Gastrocnemius medialis (tissue), 4 donors: ENCODE measurements at regions of chrX and their contacts with region 1.

Region 1: DNA sequence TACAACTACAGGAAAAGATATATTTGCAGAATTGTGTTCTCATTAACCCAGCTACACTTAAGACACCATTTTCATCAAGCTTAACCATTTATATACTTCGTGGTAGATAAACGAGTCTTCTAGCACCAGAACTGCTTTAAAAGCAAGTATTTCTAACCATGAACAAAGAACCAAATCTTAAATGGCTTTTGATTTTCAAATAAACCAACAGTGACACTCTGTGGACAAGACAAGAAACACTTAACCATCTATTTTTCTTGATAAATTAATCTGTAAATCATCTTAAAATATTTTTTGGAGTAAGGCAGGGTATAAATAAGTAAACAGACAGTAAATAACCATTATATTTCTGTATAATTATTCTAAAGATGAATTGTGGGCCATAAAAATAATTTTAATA is 10.2 kb downstream of the BEND2 start:
- DNase-seq: no peak
- ATAC-seq: no peak
- H3K4me3 ChIP-seq: no peak overlapping the region
- H3K27ac ChIP-seq: no peak overlapping the region
- H3K4me1 ChIP-seq: no peaks in the 10 kb centered on the region
- H3K27me3 ChIP-seq: no peaks in the 10 kb centered on the region
- CTCF ChIP-seq: peak in 2 of 5 experiments; percentile 7 to 35
- POLR2A ChIP-seq: no peak

Region 2: GRCh38 chrX:17788439-17788838 is 422.0 kb before region 1 on chrX:
- in situ Hi-C with region 1: loop called in 2 of 4 experiments (anchors 25 kb)
- intact Hi-C with region 1: loop called (anchors 10 kb)
- DNase-seq: no peak
- ATAC-seq: no peak
- H3K4me3 ChIP-seq: no peak overlapping the region
- H3K27ac ChIP-seq: no peak overlapping the region
- H3K4me1 ChIP-seq: no peaks in the 10 kb centered on the region
- H3K27me3 ChIP-seq: no peaks in the 10 kb centered on the region
- CTCF ChIP-seq: peak; percentile 38 to 75 (median 63)
- POLR2A ChIP-seq: no peak

Region 3: DNA sequence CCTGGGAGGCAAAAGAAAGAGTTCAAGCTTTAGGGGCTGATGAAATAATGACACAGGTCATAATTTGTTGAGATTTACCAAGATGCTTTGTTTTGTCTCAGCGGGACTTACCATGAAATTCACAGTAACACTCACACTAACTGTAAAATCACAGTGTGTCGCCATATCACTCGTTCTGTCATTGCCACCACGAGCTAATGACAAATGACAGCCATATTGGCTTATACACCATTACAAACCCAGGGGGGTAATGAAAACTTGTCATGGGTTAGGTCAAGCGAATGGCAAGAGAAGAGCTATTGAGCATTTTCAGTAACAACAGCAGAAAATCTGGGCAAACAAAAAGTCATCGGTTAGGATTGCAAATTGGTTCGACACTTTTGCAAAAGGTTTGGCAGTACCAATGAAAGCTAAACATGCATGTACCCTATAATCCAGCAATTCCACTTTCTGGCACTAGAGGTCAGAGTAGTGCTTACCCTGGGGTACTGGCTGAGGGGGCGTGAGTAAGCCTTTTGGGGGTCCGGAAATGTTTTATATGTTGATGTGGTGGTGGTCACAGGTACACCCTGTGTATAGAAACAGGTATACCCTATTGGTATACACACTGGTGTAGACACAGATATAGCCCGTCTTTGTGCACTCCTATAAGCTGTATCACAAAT is 265.5 kb before region 1 on chrX:
- in situ Hi-C with region 1: loop called in 1 of 4 experiments (anchors 25 kb)
- intact Hi-C with region 1: no loop called
- DNase-seq: no peak
- ATAC-seq: no peak
- H3K4me3 ChIP-seq: no peak overlapping the region
- H3K27ac ChIP-seq: no peak overlapping the region
- H3K4me1 ChIP-seq: no peaks in the 10 kb centered on the region
- H3K27me3 ChIP-seq: no peaks in the 10 kb centered on the region
- CTCF ChIP-seq: peak in 1 of 5 experiments; percentile 23
- POLR2A ChIP-seq: no peak